A549 (cell line): ENCODE measurements at regions of chr19 and their contacts with region 1.

Region 1: DNA sequence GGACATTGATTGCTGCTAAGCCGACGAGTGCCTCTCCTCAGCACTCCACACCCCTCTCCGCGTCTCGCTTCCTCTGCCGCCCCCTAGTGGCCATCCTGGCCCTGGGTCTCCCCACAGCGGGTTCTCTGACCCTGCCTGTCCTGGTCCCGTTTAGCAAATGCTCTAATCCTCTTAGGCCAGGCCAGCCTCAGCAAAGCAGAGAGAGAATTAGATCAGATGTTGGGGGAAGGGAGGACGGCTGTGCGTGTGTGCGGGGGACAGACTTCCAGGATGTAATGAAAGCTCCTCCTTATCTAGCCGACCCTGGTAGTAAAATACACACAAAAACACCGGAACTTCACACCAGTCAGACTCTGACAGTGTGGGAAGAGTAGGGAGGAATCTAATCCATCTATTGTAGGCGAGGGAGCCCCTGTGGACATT is 4.5 kb downstream of the TPRX2 start:
- DNase-seq: peak; percentile 82 to 97
- ATAC-seq: peak; percentile 91 to 98
- H3K4me3 ChIP-seq: no peak overlapping the region
- H3K27ac ChIP-seq: no peak overlapping the region
- H3K4me1 ChIP-seq: peaks cover 1% of the 10 kb centered on the region
- CTCF ChIP-seq: peak; percentile 98
- EP300 ChIP-seq: no peak
- POLR2A ChIP-seq: no peak
- RAD21 ChIP-seq: peak; percentile 81 to 89

Region 2: GRCh38 chr19:47790398-47790814 is 73.1 kb before region 1 on chr19:
- CTCF ChIA-PET with region 1: interaction called, 57 read pairs
- POLR2A ChIA-PET with region 1: no interaction called
- DNase-seq: peak; percentile 85 to 94
- ATAC-seq: peak; percentile 91
- H3K4me3 ChIP-seq: no peak overlapping the region
- H3K27ac ChIP-seq: no peak overlapping the region
- H3K4me1 ChIP-seq: no peaks in the 10 kb centered on the region
- CTCF ChIP-seq: peak; percentile 86
- EP300 ChIP-seq: no peak
- POLR2A ChIP-seq: no peak
- RAD21 ChIP-seq: peak; percentile 28 to 46; a peak in 2 of 5 replicates

Region 3: DNA sequence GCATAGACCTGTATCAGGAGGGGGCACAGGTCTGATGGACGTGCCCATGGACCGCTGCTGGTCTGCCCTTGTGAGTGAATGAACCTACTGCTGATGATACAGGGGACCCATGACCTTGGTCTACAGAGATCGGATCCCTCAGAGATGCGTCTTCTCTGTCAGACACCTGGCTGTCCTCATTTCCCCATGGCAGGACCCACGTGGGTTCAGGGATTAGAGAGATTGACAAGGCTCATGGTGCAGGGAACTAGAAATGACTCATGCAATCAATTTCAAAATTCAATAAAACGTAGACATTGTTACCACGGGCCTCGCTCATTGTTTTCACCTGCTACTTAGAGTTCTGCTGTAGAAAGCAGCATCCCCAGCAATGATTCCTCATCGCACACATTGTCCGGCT is 58.2 kb before region 1 on chr19:
- CTCF ChIA-PET with region 1: interaction called, 22 read pairs
- POLR2A ChIA-PET with region 1: no interaction called
- DNase-seq: no peak
- ATAC-seq: peak in 1 of 2 experiments; percentile 24; a peak in 3 of 6 replicates
- H3K4me3 ChIP-seq: no peak overlapping the region
- H3K27ac ChIP-seq: no peak overlapping the region
- H3K4me1 ChIP-seq: no peaks in the 10 kb centered on the region; the same call in 2 of the 3 replicates
- CTCF ChIP-seq: no peak
- EP300 ChIP-seq: no peak
- POLR2A ChIP-seq: no peak
- RAD21 ChIP-seq: no peak

Region 4: GRCh38 chr19:47824396-47824795 is 39.1 kb before region 1 on chr19:
- CTCF ChIA-PET with region 1: interaction called, 16 read pairs
- POLR2A ChIA-PET with region 1: no interaction called
- DNase-seq: no peak
- ATAC-seq: peak in 1 of 2 experiments; percentile 26; a peak in 1 of 6 replicates
- H3K4me3 ChIP-seq: no peak overlapping the region
- H3K27ac ChIP-seq: no peak overlapping the region
- H3K4me1 ChIP-seq: no peaks in the 10 kb centered on the region
- CTCF ChIP-seq: no peak
- EP300 ChIP-seq: no peak
- POLR2A ChIP-seq: no peak
- RAD21 ChIP-seq: no peak

Region 5: DNA sequence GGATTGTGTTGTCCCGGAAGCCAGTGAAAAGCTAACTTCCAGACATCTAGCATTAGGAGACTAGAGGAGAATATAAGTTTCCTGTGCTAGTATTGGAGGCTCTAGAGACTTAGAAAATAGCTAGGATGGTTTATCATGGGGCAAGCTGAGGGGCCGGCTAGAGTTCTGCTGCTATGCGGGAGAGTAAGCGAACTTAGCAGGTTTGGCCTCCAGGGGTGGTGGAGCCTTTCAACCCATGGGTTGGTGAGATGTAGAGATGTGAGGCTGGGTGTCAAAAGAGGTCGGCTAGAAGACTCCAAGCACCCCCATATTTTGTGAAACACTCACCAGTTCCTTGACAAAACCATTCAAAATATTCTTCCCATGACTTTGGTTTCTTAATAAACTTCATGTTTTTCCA is 18.2 kb after region 1 on chr19:
- CTCF ChIA-PET with region 1: interaction called, 79 read pairs
- POLR2A ChIA-PET with region 1: no interaction called
- DNase-seq: no peak
- ATAC-seq: peak; percentile 40 to 60; a peak in 3 of 6 replicates
- H3K4me3 ChIP-seq: no peak overlapping the region
- H3K27ac ChIP-seq: no peak overlapping the region
- H3K4me1 ChIP-seq: no peaks in the 10 kb centered on the region
- CTCF ChIP-seq: no peak
- EP300 ChIP-seq: no peak
- POLR2A ChIP-seq: no peak
- RAD21 ChIP-seq: no peak

Region 6: GRCh38 chr19:47994209-47994802 is 130.8 kb after region 1 on chr19 and contains the start of gene ELSPBP1:
- CTCF ChIA-PET with region 1: no interaction called
- POLR2A ChIA-PET with region 1: no interaction called
- DNase-seq: no peak
- ATAC-seq: no peak
- H3K4me3 ChIP-seq: no peak within 1 kb of the TSS
- H3K27ac ChIP-seq: no peak within 1 kb of the TSS
- H3K4me1 ChIP-seq: no peaks in the 10 kb centered on the region
- CTCF ChIP-seq: no peak
- EP300 ChIP-seq: no peak
- POLR2A ChIP-seq: no peak
- RAD21 ChIP-seq: no peak
- polyA plus RNA-seq, gene ELSPBP1: not detected in 2 replicates